IMR-90 (cell line): ENCODE measurements at regions of chr15 and their contacts with region 1.

Region 1: GRCh38 chr15:71443538-71443937 is 328.3 kb downstream of the THSD4 start:
- DNase-seq: peak; percentile 51
- ATAC-seq: peak; percentile 53
- H3K4me3 ChIP-seq: no peak overlapping the region
- H3K27ac ChIP-seq: no peak overlapping the region
- H3K4me1 ChIP-seq: peaks cover 17% of the 10 kb centered on the region
- H3K27me3 ChIP-seq: no peaks in the 10 kb centered on the region
- CTCF ChIP-seq: peak; percentile 75
- POLR2A ChIP-seq: no peak
- RAD21 ChIP-seq: peak; percentile 60

Region 2: GRCh38 chr15:69703532-69704187 is 1739.9 kb before region 1 on chr15:
- CTCF ChIA-PET with region 1: no interaction called
- POLR2A ChIA-PET with region 1: no interaction called
- dilution Hi-C with region 1: no loop called
- in situ Hi-C with region 1: no loop called
- intact Hi-C with region 1: no loop called
- DNase-seq: no peak
- ATAC-seq: no peak
- H3K4me3 ChIP-seq: no peak overlapping the region
- H3K27ac ChIP-seq: no peak overlapping the region
- H3K4me1 ChIP-seq: no peaks in the 10 kb centered on the region; the same call in 1 of the 2 replicates
- H3K27me3 ChIP-seq: peaks cover 13% of the 10 kb centered on the region
- CTCF ChIP-seq: no peak
- POLR2A ChIP-seq: no peak
- RAD21 ChIP-seq: no peak

Region 3: GRCh38 chr15:70974004-70974832 is 469.3 kb before region 1 on chr15:
- CTCF ChIA-PET with region 1: no interaction called
- POLR2A ChIA-PET with region 1: no interaction called
- dilution Hi-C with region 1: no loop called
- in situ Hi-C with region 1: loop called (anchors 5 kb)
- intact Hi-C with region 1: loop called (anchors 1 kb)
- DNase-seq: peak; percentile 83
- ATAC-seq: peak; percentile 90
- H3K4me3 ChIP-seq: no peak overlapping the region
- H3K27ac ChIP-seq: no peak overlapping the region; the same call in 1 of the 2 replicates
- H3K4me1 ChIP-seq: peaks cover 4% of the 10 kb centered on the region
- H3K27me3 ChIP-seq: no peaks in the 10 kb centered on the region
- CTCF ChIP-seq: peak; percentile 63
- POLR2A ChIP-seq: no peak
- RAD21 ChIP-seq: peak; percentile 75

Region 4: DNA sequence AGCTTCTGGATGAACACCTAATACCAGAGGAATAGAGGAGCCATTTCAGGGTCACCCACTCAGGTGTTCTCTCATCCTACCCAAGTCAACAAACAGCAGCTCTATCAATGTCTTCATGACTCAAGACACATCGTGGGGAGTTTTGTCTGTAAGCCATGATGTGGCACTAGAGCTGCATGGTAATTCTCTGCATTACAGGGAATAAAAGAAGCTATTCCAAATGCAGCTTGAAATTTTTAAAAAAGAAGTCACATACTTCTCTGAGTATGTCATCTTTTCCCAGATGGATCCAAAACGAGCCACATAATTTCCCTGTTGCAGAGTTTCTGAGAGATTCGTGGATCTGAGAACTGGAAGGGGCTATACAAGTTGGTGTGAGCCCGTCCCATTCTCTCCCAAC is 334.4 kb before region 1 on chr15:
- CTCF ChIA-PET with region 1: interaction called, 4 read pairs
- POLR2A ChIA-PET with region 1: no interaction called
- dilution Hi-C with region 1: no loop called
- in situ Hi-C with region 1: loop called (anchors 5 kb)
- intact Hi-C with region 1: loop called (anchors 1 kb)
- DNase-seq: peak; percentile 82
- ATAC-seq: peak; percentile 80
- H3K4me3 ChIP-seq: no peak overlapping the region
- H3K27ac ChIP-seq: 0 out of 2 replicates have a peak overlapping the region, but pooled peaks have one; percentile 7
- H3K4me1 ChIP-seq: peaks cover 12% of the 10 kb centered on the region
- H3K27me3 ChIP-seq: no peaks in the 10 kb centered on the region
- CTCF ChIP-seq: peak; percentile 57
- POLR2A ChIP-seq: no peak
- RAD21 ChIP-seq: peak; percentile 68

Region 5: GRCh38 chr15:71237456-71238188 is 205.9 kb before region 1 on chr15:
- CTCF ChIA-PET with region 1: no interaction called
- POLR2A ChIA-PET with region 1: no interaction called
- dilution Hi-C with region 1: no loop called
- in situ Hi-C with region 1: no loop called
- intact Hi-C with region 1: no loop called
- DNase-seq: peak; percentile 96
- ATAC-seq: peak; percentile 76
- H3K4me3 ChIP-seq: no peak overlapping the region
- H3K27ac ChIP-seq: no peak overlapping the region
- H3K4me1 ChIP-seq: peaks cover 13% of the 10 kb centered on the region
- H3K27me3 ChIP-seq: no peaks in the 10 kb centered on the region
- CTCF ChIP-seq: no peak
- POLR2A ChIP-seq: no peak
- RAD21 ChIP-seq: no peak

Region 6: DNA sequence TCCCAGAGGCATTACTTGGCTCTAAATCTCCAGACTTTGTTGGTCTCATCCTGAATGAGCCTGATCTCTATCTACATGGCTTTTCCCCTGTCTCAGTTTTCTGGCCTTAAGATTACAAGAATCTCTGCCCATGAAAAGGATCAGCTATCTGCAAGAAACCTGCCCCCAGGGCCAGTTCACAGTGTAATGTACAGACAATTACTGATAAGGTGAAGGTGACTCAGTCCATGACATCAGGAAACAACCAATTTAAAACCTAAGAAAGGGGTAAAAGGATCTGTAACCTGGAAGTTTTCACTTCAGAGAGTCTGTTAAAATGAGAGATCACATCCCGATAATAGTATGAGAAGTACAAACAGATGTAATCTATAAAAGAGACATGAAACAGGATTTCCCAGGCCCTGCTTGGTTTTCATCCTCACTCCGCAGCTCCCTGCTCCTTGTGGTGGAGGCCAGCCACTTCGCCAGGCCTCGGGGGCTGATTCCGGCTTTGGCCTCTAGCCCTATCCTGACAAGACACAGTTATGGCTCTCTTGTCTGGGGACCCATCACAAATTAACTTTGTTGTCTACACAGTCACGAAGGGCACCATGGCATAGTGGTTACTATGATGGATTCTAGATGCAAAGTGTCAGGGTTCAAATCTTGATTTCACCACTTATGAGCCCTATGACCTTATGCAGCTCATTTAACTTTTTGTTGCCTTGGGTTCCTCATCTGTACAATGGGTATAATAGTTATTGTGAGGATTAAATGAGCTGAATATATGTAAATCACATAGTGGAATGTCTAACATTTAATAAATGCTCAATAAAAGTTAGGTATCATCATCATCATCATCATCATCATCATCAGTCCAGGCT is 191.3 kb before region 1 on chr15:
- CTCF ChIA-PET with region 1: no interaction called
- POLR2A ChIA-PET with region 1: no interaction called
- dilution Hi-C with region 1: no loop called
- in situ Hi-C with region 1: no loop called
- intact Hi-C with region 1: no loop called
- DNase-seq: peak; percentile 56
- ATAC-seq: no peak
- H3K4me3 ChIP-seq: no peak overlapping the region
- H3K27ac ChIP-seq: no peak overlapping the region
- H3K4me1 ChIP-seq: peaks cover 18% of the 10 kb centered on the region
- H3K27me3 ChIP-seq: no peaks in the 10 kb centered on the region
- CTCF ChIP-seq: no peak
- POLR2A ChIP-seq: no peak
- RAD21 ChIP-seq: no peak

Region 7: GRCh38 chr15:71301958-71302621 is 141.4 kb before region 1 on chr15:
- CTCF ChIA-PET with region 1: no interaction called
- POLR2A ChIA-PET with region 1: no interaction called
- dilution Hi-C with region 1: no loop called
- in situ Hi-C with region 1: no loop called
- intact Hi-C with region 1: loop called (anchors 5 kb)
- DNase-seq: peak; percentile 23
- ATAC-seq: peak; percentile 8; the same call in 1 of the 2 replicates
- H3K4me3 ChIP-seq: no peak overlapping the region
- H3K27ac ChIP-seq: peak overlapping the region; percentile 31
- H3K4me1 ChIP-seq: peaks cover 30% of the 10 kb centered on the region
- H3K27me3 ChIP-seq: no peaks in the 10 kb centered on the region
- CTCF ChIP-seq: no peak
- POLR2A ChIP-seq: no peak
- RAD21 ChIP-seq: no peak

Region 8: DNA sequence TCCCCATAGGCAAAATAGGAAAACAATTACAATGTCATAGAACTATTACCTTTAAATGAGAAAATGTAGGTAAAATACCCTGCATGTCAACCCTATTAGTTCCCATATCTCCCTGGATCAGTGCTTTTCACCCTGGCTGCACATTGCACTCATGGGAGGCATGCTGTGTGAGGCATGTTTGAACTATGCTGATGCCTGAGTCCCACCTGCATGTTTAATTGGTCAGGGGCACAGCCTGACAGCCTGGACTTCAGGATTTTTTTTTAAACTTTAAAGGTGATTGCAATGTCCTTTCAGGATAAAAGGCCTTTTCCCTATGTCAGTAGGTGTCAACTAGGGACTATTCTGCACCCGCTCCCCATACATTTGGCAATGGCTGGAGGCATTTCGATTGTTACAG is 230.8 kb after region 1 on chr15:
- CTCF ChIA-PET with region 1: no interaction called
- POLR2A ChIA-PET with region 1: no interaction called
- dilution Hi-C with region 1: no loop called
- in situ Hi-C with region 1: no loop called
- intact Hi-C with region 1: no loop called
- DNase-seq: no peak
- ATAC-seq: no peak
- H3K4me3 ChIP-seq: no peak overlapping the region
- H3K27ac ChIP-seq: no peak overlapping the region
- H3K4me1 ChIP-seq: peaks cover 7% of the 10 kb centered on the region
- H3K27me3 ChIP-seq: no peaks in the 10 kb centered on the region
- CTCF ChIP-seq: no peak
- POLR2A ChIP-seq: no peak
- RAD21 ChIP-seq: no peak